Ascending aorta (tissue), 2 donors: ENCODE measurements at regions of chr14 and their contacts with region 1.

Region 1: GRCh38 chr14:77320238-77320935 is at the start of gene POMT2:
- DNase-seq: peak; percentile 80 to 97
- H3K4me3 ChIP-seq: peak within 1 kb of the TSS; percentile 76 to 99
- H3K27ac ChIP-seq: peak within 1 kb of the TSS; percentile 94 to 97
- H3K4me1 ChIP-seq: peaks cover 0 to 11% of the 10 kb centered on the region in 2 donors
- H3K27me3 ChIP-seq: no peaks in the 10 kb centered on the region
- CTCF ChIP-seq: peak in 1 of 3 experiments; percentile 56
- total RNA-seq, gene POMT2: 28.4 TPM

Region 2: DNA sequence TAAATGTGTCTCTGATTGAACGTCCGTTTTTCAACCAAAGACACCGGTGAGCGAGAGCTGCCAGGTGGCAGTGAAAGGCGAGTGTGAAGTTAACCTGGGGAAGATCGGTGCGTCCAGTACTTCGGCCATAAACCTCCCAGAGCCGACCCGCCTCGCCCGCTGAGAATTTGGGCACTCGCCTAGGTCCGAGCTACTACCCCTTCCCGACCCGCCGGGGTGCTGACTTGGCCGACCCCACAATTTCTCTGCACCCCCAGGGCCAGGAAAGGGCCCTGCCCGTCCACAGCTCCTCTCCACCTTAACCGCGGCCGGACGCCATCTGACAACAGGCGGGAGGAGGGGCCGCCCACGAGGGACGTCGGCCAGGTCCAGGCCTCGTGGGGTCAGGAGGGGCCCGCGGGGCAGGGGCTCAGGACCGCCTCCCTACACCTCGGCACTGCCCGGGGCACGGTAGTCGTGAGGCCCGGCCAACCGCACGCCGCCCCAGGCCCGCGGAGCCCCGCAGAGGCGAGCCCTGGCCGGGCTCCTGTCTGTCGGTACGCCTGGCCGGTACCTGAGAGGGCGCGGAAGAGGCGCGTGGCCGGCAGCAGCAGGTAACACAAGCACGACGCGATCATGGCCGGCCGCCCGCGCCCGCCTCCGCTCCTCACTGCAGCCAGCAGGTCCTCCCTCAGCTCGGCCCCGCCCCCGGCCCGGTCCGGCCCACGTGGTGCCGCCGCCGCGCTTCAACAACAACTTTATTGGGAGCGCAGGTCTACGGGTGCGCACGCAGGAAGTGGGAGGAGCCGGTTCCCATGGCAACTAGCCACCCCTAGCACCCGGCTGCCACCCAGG is 508.0 kb before region 1 on chr14 and contains the start of gene ANGEL1:
- intact Hi-C with region 1: loop called (anchors 2 kb)
- DNase-seq: peak; percentile 86 to 98
- H3K4me3 ChIP-seq: peak within 1 kb of the TSS; percentile 76 to 88
- H3K27ac ChIP-seq: peak within 1 kb of the TSS; percentile 74 to 79
- H3K4me1 ChIP-seq: peaks cover 0 to 6% of the 10 kb centered on the region in 2 donors
- H3K27me3 ChIP-seq: no peaks in the 10 kb centered on the region
- CTCF ChIP-seq: no peak
- total RNA-seq, gene ANGEL1: 15.5 TPM

Region 3: DNA sequence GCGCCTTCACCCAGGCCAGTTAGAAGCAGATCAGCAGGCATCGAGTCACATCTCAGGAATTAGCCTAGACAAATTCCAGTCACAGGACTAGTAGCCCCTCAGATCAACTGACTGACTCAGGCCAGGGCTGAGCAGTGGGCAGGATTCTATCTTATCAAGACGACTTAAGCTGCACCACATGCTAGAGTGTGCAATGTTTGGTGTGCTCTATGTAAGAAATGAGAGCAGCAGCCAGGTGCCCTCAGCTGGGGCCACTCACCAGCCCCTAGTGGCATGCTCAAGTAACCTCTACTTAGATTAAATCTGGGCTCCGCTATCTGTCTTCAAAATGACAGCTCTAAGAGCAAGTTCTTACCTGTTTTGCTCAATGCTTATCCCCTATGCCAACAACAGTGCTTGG is 29.6 kb before region 1 on chr14:
- intact Hi-C with region 1: no loop called
- DNase-seq: no peak
- H3K4me3 ChIP-seq: no peak overlapping the region
- H3K27ac ChIP-seq: no peak overlapping the region
- H3K4me1 ChIP-seq: no peaks in the 10 kb centered on the region
- H3K27me3 ChIP-seq: no peaks in the 10 kb centered on the region
- CTCF ChIP-seq: no peak

Region 4: DNA sequence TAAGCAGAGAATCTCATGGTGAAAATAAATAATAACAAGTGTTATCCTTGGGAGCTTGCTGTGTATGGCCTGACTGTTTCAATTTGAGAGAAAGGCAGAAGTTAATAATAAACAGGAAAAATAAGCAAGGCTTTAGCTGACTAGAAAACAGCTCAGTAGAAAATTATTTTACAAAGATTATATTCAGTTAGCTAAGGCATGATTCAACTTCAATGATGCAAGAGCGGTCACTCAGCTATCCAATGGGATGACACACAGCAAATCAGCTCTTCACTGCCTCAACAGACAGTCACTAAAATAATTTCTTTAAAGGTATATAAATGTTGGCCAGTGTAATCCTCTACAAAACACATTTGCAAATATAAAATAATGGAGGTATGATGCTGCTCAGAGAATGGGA is 19.0 kb after region 1 on chr14:
- intact Hi-C with region 1: no loop called
- DNase-seq: no peak
- H3K4me3 ChIP-seq: no peak overlapping the region
- H3K27ac ChIP-seq: no peak overlapping the region
- H3K4me1 ChIP-seq: no peaks in the 10 kb centered on the region
- H3K27me3 ChIP-seq: no peaks in the 10 kb centered on the region
- CTCF ChIP-seq: no peak

Region 5: DNA sequence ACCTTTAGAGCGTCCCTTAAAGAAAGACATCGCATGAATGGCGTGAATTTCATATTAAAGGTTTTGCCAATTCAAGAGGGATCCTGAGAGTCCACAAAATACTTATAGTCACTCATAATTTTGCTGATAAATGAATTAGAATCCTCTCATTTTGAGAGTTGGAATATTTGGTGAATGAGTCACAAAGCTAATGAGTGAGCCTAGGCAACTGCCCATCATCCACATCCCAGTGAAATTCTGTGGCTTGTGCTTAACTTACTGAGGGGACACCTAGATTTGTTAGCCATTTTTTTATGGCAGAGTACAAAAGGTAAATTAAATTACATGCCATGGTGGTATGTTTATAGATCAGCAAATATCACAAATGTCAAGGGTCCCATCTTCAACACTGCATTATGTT is 115.7 kb after region 1 on chr14:
- intact Hi-C with region 1: no loop called
- DNase-seq: no peak
- H3K4me3 ChIP-seq: no peak overlapping the region
- H3K27ac ChIP-seq: no peak overlapping the region
- H3K4me1 ChIP-seq: no peaks in the 10 kb centered on the region
- H3K27me3 ChIP-seq: no peaks in the 10 kb centered on the region
- CTCF ChIP-seq: no peak

Region 6: DNA sequence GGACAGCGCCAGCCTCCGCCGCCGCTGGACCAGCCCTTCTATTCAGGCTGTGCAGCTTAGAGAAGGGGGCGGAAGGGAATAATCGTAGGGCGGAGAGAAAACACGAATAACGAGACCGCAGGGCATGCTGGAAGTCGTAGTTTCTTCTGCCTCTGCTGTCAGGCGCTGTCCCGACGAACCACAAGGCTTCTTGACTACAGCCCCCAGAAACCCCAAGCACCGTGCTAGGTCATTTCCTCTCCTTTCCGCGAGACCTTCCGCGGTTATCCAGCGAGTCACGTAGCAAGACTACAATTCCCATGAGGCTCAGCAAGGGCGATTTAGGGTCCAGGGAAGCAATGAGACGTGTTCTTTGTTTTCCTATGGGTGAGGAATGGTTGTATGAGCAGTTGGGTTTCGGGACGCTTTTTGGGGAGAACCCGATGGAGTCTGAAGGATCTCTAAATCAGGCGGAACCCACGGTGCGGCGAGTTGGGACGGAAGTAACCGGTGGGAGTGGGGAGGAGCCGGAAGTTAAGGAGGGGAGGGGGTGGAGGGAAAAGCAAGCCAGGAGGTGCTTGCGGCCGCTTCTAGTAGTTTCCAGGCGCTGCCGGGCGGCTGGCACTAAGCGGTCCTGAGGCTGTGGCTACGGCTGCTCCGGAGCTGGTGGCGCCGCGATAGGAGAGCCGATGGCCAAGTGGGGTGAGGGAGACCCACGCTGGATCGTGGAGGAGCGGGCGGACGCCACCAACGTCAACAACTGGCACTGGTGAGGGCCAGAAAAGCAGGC is 137.3 kb after region 1 on chr14 and contains the starts of genes AHSA1 and VIPAS39:
- intact Hi-C with region 1: loop called (anchors 1 kb)
- DNase-seq: peak; percentile 94 to 98
- H3K4me3 ChIP-seq: peak within 1 kb of the TSS; percentile 71 to 92
- H3K27ac ChIP-seq: peak within 1 kb of the TSS; percentile 86 to 90
- H3K4me1 ChIP-seq: peaks cover 5 to 23% of the 10 kb centered on the region in 2 donors
- H3K27me3 ChIP-seq: no peaks in the 10 kb centered on the region
- CTCF ChIP-seq: no peak
- total RNA-seq, gene AHSA1: 123 TPM
- total RNA-seq, gene VIPAS39: 2.8 TPM

Region 7: GRCh38 chr14:77707724-77708408 is 387.5 kb after region 1 on chr14 and contains the starts of genes ALKBH1 and SLIRP:
- intact Hi-C with region 1: loop called (anchors 5 kb)
- DNase-seq: peak; percentile 52 to 93
- H3K4me3 ChIP-seq: peak within 1 kb of the TSS; percentile 66 to 88
- H3K27ac ChIP-seq: peak within 1 kb of the TSS; percentile 13 to 45
- H3K4me1 ChIP-seq: peaks cover 12 to 20% of the 10 kb centered on the region in 2 donors
- H3K27me3 ChIP-seq: no peaks in the 10 kb centered on the region
- CTCF ChIP-seq: no peak
- total RNA-seq, gene ALKBH1: 14.5 TPM
- total RNA-seq, gene SLIRP: 3.1 TPM

Region 8: DNA sequence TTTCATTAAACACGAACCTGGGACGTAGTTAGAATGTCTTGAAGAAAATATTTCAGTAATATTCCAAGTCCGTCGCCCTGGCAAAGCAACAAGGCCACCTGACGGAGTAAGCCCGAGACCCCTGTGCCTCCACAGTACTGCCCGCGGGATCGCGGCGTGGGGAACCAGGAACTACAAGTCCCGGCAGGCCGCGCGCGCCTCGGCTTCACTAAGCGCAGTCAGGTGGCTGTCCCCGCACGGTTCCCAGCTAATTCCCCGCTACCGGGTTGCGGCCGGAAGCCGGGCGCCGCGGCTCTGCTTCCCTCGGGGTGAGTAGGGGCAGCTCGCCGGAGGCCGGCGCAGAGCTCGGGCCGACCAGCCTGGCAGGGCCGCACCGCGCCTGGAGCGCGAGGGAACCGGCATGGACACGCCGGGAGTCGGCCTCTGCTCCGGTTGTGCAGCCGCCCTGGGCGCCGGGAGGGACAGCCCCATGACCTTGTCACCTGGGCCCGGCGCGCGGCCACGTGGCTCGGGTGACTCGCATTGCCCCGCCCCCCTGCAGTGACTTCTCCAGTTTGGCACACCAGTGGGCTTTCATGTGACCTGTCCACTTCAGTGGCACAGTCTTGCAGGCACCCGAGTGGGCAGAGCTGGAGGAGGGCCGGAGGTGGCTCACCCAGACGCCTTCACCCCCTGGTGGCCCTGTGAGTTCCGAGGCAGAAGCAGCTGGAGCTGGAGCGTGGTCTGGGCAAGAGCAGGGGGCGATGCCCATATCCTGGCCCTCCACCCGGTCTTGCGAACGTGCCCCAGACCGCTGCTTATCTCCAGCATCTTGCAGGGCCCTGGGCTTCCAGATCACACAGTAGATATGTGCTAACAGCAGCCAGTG is 479.7 kb after region 1 on chr14 and contains the start of gene ADCK1:
- intact Hi-C with region 1: loop called (anchors 2 kb)
- DNase-seq: peak; percentile 74 to 95
- H3K4me3 ChIP-seq: peak within 1 kb of the TSS; percentile 91 to 98
- H3K27ac ChIP-seq: peak within 1 kb of the TSS; percentile 87 to 94
- H3K4me1 ChIP-seq: peaks cover 0 to 3% of the 10 kb centered on the region in 2 donors
- H3K27me3 ChIP-seq: no peaks in the 10 kb centered on the region
- CTCF ChIP-seq: peak; percentile 36 to 52 (median 37)
- total RNA-seq, gene ADCK1: 0.43 TPM